Heart right ventricle (tissue), 16 donors: ENCODE measurements at regions of chr22 and their contacts with region 1.

Region 1: GRCh38 chr22:20725987-20726558 is 47.8 kb upstream of the SERPIND1 start:
- DNase-seq: no peak
- ATAC-seq: no peak
- H3K4me3 ChIP-seq: no peak overlapping the region
- H3K27ac ChIP-seq: no peak overlapping the region
- H3K4me1 ChIP-seq: peaks cover 0 to 8% (median 0%) of the 10 kb centered on the region in 9 donors
- H3K27me3 ChIP-seq: no peaks in the 10 kb centered on the region
- CTCF ChIP-seq: no peak

Region 2: DNA sequence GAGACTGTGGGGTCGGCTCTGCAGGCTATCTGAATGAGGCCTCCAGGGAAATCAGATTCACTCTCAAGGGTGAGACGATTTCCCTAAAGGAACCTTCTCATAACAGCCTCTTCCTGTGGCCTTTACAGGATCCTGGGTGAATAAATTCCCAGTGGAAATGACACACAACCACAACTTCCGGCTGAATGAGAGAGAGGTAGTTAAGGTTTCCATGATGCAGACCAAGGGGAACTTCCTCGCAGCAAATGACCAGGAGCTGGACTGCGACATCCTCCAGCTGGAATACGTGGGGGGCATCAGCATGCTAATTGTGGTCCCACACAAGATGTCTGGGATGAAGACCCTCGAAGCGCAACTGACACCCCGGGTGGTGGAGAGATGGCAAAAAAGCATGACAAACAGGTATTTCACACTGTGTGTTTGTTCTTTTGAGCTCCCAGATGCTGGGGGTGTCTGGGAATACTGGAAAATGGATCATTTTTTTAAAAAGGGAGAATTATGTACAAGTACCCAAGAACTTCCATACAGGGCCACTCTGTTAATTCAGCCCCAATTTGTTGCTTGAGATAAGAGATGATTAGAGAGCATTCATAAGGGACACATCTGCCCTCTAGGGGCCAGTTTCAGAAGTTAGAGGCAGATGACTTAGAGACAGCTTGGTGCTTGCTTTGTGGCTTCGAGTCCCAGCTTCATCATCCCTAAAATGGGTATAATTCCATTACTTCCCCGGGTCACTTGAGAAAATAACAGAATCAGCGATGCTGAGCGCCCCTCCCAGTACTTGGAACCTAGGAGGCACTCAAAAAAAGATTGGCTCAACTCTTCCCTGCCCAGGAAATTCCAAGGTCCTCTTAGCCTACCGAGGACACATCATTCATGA is 58.0 kb after region 1 on chr22:
- intact Hi-C with region 1: loop called in 1 of 10 experiments (anchors 5 kb)
- DNase-seq: peak in 1 of 2 donors; percentile 23
- ATAC-seq: peak in 1 of 8 donors; percentile 23
- H3K4me3 ChIP-seq: no peak overlapping the region
- H3K27ac ChIP-seq: no peak overlapping the region
- H3K4me1 ChIP-seq: peaks cover 0 to 33% (median 12%) of the 10 kb centered on the region in 9 donors
- H3K27me3 ChIP-seq: no peaks in the 10 kb centered on the region
- CTCF ChIP-seq: peak; percentile 44 to 73 (median 63)

Region 3: DNA sequence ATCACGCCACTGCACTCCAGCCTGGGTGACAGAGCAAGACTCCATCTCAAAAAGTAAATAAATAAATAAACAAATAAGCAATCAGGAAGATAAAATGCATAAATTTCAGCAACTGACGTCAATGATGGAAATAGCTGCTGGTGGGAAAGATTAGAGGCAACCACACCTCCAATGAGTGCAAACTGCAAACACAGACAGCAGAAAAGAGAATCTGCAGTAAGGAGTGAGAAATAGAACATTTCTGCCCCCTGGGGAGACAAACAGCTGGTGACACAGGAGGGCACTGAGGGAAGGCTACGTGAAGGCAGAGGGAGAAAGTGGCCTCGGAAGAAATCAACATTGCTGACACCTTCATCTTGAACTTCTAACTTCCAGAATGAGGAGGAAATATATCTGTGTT is 126.0 kb after region 1 on chr22:
- intact Hi-C with region 1: no loop called
- DNase-seq: no peak
- ATAC-seq: no peak
- H3K4me3 ChIP-seq: no peak overlapping the region
- H3K27ac ChIP-seq: no peak overlapping the region
- H3K4me1 ChIP-seq: peaks cover 10 to 36% (median 21%) of the 10 kb centered on the region in 9 donors
- H3K27me3 ChIP-seq: no peaks in the 10 kb centered on the region
- CTCF ChIP-seq: no peak